SK-N-SH (cell line): ENCODE measurements at regions of chr2 and their contacts with region 1.

Region 1: GRCh38 chr2:636641-637405 is 40.4 kb downstream of the TMEM18 start:
- DNase-seq: peak; percentile 89
- H3K4me3 ChIP-seq: no peak overlapping the region
- H3K27ac ChIP-seq: peak overlapping the region in 1 of 2 experiments; percentile 39; a peak in 1 of 4 replicates
- H3K4me1 ChIP-seq: peaks cover 0 to 11% of the 10 kb centered on the region in 2 experiments; a peak in 2 of 4 replicates
- H3K27me3 ChIP-seq: no peaks in the 10 kb centered on the region
- CTCF ChIP-seq: peak; percentile 82
- EP300 ChIP-seq: no peak
- RAD21 ChIP-seq: peak; percentile 96

Region 2: GRCh38 chr2:246489-247144 is 390.2 kb before region 1 on chr2:
- CTCF ChIA-PET with region 1: interaction called, 20 read pairs
- POLR2A ChIA-PET with region 1: no interaction called
- DNase-seq: peak; percentile 61
- H3K4me3 ChIP-seq: no peak overlapping the region
- H3K27ac ChIP-seq: peak overlapping the region in 1 of 2 experiments; percentile 11; a peak in 1 of 4 replicates
- H3K4me1 ChIP-seq: peaks cover 4 to 5% of the 10 kb centered on the region in 2 experiments; a peak in 2 of 4 replicates
- H3K27me3 ChIP-seq: no peaks in the 10 kb centered on the region
- CTCF ChIP-seq: peak; percentile 73
- EP300 ChIP-seq: no peak
- RAD21 ChIP-seq: peak; percentile 59

Region 3: GRCh38 chr2:359047-359446 is 277.8 kb before region 1 on chr2:
- CTCF ChIA-PET with region 1: no interaction called
- POLR2A ChIA-PET with region 1: no interaction called
- DNase-seq: peak; percentile 57
- H3K4me3 ChIP-seq: no peak overlapping the region
- H3K27ac ChIP-seq: no peak overlapping the region
- H3K4me1 ChIP-seq: peaks cover 0 to 12% of the 10 kb centered on the region in 2 experiments; a peak in 1 of 4 replicates
- H3K27me3 ChIP-seq: no peaks in the 10 kb centered on the region
- CTCF ChIP-seq: no peak
- EP300 ChIP-seq: no peak
- RAD21 ChIP-seq: no peak

Region 4: GRCh38 chr2:555164-555922 is 81.5 kb before region 1 on chr2:
- CTCF ChIA-PET with region 1: interaction called, 13 read pairs
- POLR2A ChIA-PET with region 1: no interaction called
- DNase-seq: peak; percentile 44
- H3K4me3 ChIP-seq: no peak overlapping the region
- H3K27ac ChIP-seq: no peak overlapping the region; a peak in 1 of 4 replicates
- H3K4me1 ChIP-seq: peaks cover 0 to 20% of the 10 kb centered on the region in 2 experiments; a peak in 1 of 4 replicates
- H3K27me3 ChIP-seq: no peaks in the 10 kb centered on the region
- CTCF ChIP-seq: no peak
- EP300 ChIP-seq: no peak
- RAD21 ChIP-seq: no peak

Region 5: DNA sequence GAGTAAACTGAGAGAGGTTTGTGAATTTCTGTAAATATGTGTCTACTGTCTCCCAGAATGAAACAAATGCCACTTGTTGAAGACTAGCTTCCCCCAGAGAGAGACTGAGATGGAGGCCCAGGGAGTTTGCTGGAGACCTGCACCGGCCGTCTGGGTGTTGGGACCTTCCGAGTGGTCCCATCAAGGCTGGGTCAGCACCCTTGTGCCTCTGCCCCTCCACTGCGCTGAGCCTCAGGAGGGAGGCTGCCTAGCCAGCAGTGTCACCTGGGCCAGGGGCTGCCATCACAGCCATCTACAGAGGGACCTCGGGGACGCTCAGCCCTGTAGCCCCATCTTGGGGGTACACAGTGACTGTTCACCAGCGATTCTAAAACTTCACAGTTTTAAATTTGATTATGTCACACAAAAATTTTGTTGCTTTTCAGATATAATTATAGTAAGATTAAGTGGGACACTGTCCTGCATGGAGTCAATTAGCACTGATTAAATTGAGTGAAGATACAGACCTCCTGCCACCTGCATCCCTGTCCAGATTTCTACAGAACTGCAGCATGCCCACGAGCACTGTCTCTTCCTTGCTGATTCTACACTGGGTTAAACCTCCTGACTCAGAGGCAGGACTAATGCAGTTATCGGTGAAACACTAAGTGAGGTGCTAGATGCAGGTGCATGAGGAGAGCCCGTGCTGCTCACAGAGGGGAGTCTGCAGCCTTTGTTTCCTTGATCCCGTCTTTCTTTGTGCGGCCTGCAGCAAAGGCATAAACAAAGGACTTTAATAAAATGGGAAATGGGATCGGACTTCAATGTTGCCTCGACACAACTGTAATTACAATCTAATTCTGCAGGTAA is 10.1 kb before region 1 on chr2:
- CTCF ChIA-PET with region 1: interaction called, 39 read pairs
- POLR2A ChIA-PET with region 1: no interaction called
- DNase-seq: peak; percentile 64
- H3K4me3 ChIP-seq: no peak overlapping the region
- H3K27ac ChIP-seq: peak overlapping the region in 1 of 2 experiments; percentile 96; a peak in 2 of 4 replicates
- H3K4me1 ChIP-seq: peaks cover 0 to 48% of the 10 kb centered on the region in 2 experiments; a peak in 2 of 4 replicates
- H3K27me3 ChIP-seq: no peaks in the 10 kb centered on the region
- CTCF ChIP-seq: no peak
- EP300 ChIP-seq: peak in 1 of 2 experiments; percentile 83; a peak in 1 of 4 replicates
- RAD21 ChIP-seq: peak; percentile 37; the same call in 1 of the 2 replicates

Region 6: GRCh38 chr2:667332-667999 is 30.6 kb after region 1 on chr2:
- CTCF ChIA-PET with region 1: interaction called, 11 read pairs
- POLR2A ChIA-PET with region 1: no interaction called
- DNase-seq: peak; percentile 76
- H3K4me3 ChIP-seq: no peak overlapping the region
- H3K27ac ChIP-seq: no peak overlapping the region
- H3K4me1 ChIP-seq: no peaks in the 10 kb centered on the region
- H3K27me3 ChIP-seq: no peaks in the 10 kb centered on the region
- CTCF ChIP-seq: peak; percentile 74
- EP300 ChIP-seq: no peak
- RAD21 ChIP-seq: peak; percentile 72

Region 7: GRCh38 chr2:842151-842803 is 205.5 kb after region 1 on chr2:
- CTCF ChIA-PET with region 1: no interaction called
- POLR2A ChIA-PET with region 1: no interaction called
- DNase-seq: no peak
- H3K4me3 ChIP-seq: no peak overlapping the region
- H3K27ac ChIP-seq: no peak overlapping the region
- H3K4me1 ChIP-seq: peaks cover 0 to 10% of the 10 kb centered on the region in 2 experiments; a peak in 2 of 4 replicates
- H3K27me3 ChIP-seq: no peaks in the 10 kb centered on the region
- CTCF ChIP-seq: no peak
- EP300 ChIP-seq: no peak
- RAD21 ChIP-seq: no peak